ENCODE measurements at regions of chr3 and their contacts with region 1.

Region 1: GRCh38 chr3:49929331-49930240 is at the start of gene MON1A:
- DNase-seq: peak; percentile 77 to 89 (median 80)
- H3K4me3 ChIP-seq: peak within 1 kb of the TSS; percentile 97
- H3K4me3 Mint-ChIP-seq: peak within 1 kb of the TSS; percentile 80 to 92 (median 84)
- H3K27ac ChIP-seq: peak within 1 kb of the TSS; percentile 76
- H3K27ac Mint-ChIP-seq: peak within 1 kb of the TSS; percentile 84 to 96 (median 90)
- H3K4me1 ChIP-seq: peaks cover 22% of the 10 kb centered on the region
- H3K4me1 Mint-ChIP-seq: peaks cover 22 to 42% (median 25%) of the 10 kb centered on the region in 3 donors
- H3K27me3 ChIP-seq: no peaks in the 10 kb centered on the region
- H3K27me3 Mint-ChIP-seq: no peaks in the 10 kb centered on the region
- total RNA-seq, gene MON1A: 17.9 to 18.1 TPM

Region 2: DNA sequence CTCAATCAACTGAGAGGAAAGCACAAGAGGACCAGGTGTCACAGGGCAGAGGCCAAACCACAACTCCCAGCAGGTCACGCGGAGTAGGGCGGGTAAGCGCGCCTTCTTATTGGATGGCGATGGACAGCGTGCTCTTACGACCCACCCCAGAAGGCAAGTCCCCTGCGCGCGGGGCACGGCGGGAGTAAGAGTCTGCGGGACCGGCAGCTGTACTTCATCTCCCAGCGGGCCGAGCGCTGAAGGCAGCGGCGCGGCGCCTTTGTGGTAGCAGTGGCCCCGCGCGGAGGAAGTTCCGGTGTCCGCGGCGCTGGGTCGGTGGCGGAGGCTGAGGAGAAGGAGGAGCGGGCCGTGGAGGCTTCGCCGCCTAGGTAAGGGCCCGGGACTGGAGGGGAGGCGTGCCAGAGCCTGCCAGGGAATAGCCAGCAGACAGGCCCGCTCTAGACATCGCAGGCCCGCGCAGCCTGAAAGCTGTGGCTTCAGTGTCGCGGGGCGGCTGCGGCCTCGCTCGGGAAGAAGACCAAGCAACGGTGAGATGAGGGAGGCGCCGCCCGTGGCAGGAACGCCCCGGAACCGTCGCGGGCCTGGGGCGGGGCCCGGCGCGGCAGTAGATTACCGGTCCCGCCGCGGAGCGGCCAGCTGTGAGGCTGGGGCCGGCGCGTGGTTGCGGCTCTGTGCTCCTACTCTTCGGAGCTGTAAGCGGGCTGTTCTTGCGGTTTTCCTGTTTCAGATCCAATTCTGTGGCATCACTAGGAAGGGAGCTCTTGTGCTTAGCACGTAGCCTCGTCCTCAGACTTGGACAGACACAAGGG is 10.5 kb after region 1 on chr3 and contains the start of gene RBM6:
- CTCF ChIA-PET with region 1: interaction called, 11 read pairs
- POLR2A ChIA-PET with region 1: interaction called, 19 read pairs
- DNase-seq: peak; percentile 87 to 95 (median 91)
- H3K4me3 ChIP-seq: peak within 1 kb of the TSS; percentile 73
- H3K4me3 Mint-ChIP-seq: peak within 1 kb of the TSS; percentile 96 to 100 (median 98)
- H3K27ac ChIP-seq: peak within 1 kb of the TSS; percentile 78
- H3K27ac Mint-ChIP-seq: peak within 1 kb of the TSS; percentile 97 to 100 (median 98)
- H3K4me1 ChIP-seq: peaks cover 12% of the 10 kb centered on the region
- H3K4me1 Mint-ChIP-seq: peaks cover 25 to 38% (median 38%) of the 10 kb centered on the region in 3 donors
- H3K27me3 ChIP-seq: no peaks in the 10 kb centered on the region
- H3K27me3 Mint-ChIP-seq: no peaks in the 10 kb centered on the region
- total RNA-seq, gene RBM6: 71.6 to 75.8 TPM